Ascending aorta (tissue), 2 donors: ENCODE measurements at regions of chr16 and their contacts with region 1.

Region 1: GRCh38 chr16:381789-382717 is at the start of gene PGAP6:
- DNase-seq: no peak
- H3K4me3 ChIP-seq: peak within 1 kb of the TSS; percentile 86 to 98
- H3K27ac ChIP-seq: peak within 1 kb of the TSS; percentile 64
- H3K4me1 ChIP-seq: peaks cover 5 to 12% of the 10 kb centered on the region in 2 donors
- H3K27me3 ChIP-seq: no peaks in the 10 kb centered on the region
- CTCF ChIP-seq: no peak
- total RNA-seq, gene PGAP6: 47.6 TPM

Region 2: GRCh38 chr16:370443-370842 is 11.6 kb before region 1 on chr16 and contains the start of gene MRPL28:
- intact Hi-C with region 1: loop called (anchors 1 kb)
- DNase-seq: peak; percentile 78 to 98
- H3K4me3 ChIP-seq: peak within 1 kb of the TSS; percentile 53 to 70
- H3K27ac ChIP-seq: peak within 1 kb of the TSS; percentile 36 to 59
- H3K4me1 ChIP-seq: peaks cover 8 to 12% of the 10 kb centered on the region in 2 donors
- H3K27me3 ChIP-seq: no peaks in the 10 kb centered on the region
- CTCF ChIP-seq: no peak
- total RNA-seq, gene MRPL28: 47.8 TPM

Region 3: GRCh38 chr16:401468-402348 is 19.7 kb after region 1 on chr16 and contains the start of gene DECR2:
- intact Hi-C with region 1: loop called (anchors 1 kb)
- DNase-seq: peak; percentile 75 to 97
- H3K4me3 ChIP-seq: peak within 1 kb of the TSS; percentile 63 to 76
- H3K27ac ChIP-seq: peak within 1 kb of the TSS; percentile 88 to 93
- H3K4me1 ChIP-seq: peaks cover 4 to 10% of the 10 kb centered on the region in 2 donors
- H3K27me3 ChIP-seq: no peaks in the 10 kb centered on the region
- CTCF ChIP-seq: peak; percentile 21 to 67 (median 63)
- total RNA-seq, gene DECR2: 44.0 TPM

Region 4: DNA sequence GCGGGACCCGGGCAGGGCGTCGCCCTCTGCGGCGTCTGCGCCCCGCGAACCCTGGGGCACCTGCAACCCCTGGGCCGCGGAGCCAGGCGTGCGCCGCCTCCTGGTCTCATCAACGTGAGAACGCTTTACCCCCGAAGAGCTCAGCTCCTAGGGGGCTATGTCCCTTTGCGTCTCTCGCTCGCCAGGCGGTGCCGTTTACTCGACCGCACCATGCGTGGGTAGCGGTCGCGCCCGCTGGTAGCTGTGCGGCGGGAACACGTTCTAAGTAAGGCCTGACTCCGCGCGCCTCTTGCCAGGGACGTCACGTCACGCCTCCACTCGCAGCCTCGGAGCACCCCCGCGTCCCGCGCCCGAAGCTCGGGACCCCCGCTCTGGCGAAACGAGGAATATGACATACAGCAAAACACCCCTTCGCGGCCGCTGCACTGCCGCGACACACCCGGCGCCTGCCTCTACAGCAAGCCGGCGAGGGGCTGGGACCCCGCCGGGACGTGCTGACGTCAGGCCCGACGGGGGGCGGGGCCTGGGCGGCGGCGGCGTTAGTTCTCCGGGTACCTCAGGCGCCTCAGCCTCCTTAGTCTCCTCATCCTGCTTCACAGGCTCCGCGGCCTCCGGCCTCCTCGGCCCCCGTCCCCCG is 43.1 kb after region 1 on chr16 and contains the start of gene RAB11FIP3:
- intact Hi-C with region 1: loop called (anchors 5 kb)
- DNase-seq: peak; percentile 43 to 88
- H3K4me3 ChIP-seq: peak within 1 kb of the TSS; percentile 76 to 81
- H3K27ac ChIP-seq: peak within 1 kb of the TSS; percentile 95 to 97
- H3K4me1 ChIP-seq: peaks cover 0 to 20% of the 10 kb centered on the region in 2 donors
- H3K27me3 ChIP-seq: no peaks in the 10 kb centered on the region
- CTCF ChIP-seq: peak in 2 of 3 experiments; percentile 5 to 32
- total RNA-seq, gene RAB11FIP3: 47.0 TPM

Region 5: GRCh38 chr16:589658-590159 is 207.7 kb after region 1 on chr16 and contains the start of gene RAB40C:
- intact Hi-C with region 1: loop called (anchors 5 kb)
- DNase-seq: peak; percentile 92 to 99
- H3K4me3 ChIP-seq: peak within 1 kb of the TSS; percentile 85 to 92
- H3K27ac ChIP-seq: peak within 1 kb of the TSS; percentile 92 to 94
- H3K4me1 ChIP-seq: peaks cover 8 to 32% of the 10 kb centered on the region in 2 donors
- H3K27me3 ChIP-seq: no peaks in the 10 kb centered on the region
- CTCF ChIP-seq: no peak
- total RNA-seq, gene RAB40C: 29.8 TPM